ENCODE measurements at regions of chr1 and their contacts with region 1.

Region 1: DNA sequence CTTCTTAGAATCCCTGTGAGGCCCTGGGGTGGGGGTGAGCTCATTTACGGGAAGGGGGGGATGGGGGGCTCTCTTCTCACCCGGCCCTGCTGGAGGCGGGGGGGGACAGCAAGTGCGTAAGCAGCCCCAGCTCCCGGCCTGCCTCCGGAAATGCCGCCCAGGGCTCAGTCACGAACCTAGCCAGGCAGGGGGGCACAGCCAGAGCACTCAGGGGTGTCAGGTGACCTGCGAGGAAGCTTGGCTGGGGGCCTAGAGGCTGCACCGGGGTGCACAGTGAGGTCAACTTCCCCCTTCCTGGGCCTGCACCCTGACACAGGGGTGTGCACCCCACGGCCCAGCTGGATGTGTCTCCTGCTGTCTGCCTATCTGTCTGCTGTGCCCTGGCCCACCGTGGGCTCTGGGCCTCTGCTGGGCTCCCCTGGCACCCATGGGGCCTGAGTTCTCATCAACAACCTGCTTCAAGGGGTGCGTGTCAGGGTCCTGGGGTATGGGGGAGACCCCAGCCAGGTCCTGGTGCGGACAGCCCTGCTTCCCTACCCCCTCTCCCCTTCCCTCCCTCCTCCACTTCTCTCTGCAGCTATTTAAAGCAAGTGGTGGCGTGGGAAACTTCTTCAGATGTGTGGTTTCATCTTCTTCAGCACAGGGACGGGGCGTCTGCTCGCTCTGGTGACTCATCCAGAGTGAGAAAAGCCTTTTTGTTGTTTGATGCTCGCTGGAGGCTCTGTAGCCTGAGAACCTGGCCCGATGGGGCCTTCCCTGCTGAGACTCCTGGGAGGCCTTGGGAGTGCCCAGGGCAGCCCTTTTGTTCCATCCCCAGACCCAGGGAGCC is 92.5 kb upstream of the RUNX3 start:
- DNase-seq: peak; percentile 28 to 53
- ATAC-seq: peak; percentile 36 to 50
- H3K4me3 ChIP-seq: no peak overlapping the region
- H3K27ac ChIP-seq: peak overlapping the region in 1 of 4 donors; percentile 39
- H3K4me1 ChIP-seq: peaks cover 0 to 4% of the 10 kb centered on the region in 2 donors
- H3K27me3 ChIP-seq: no peaks in the 10 kb centered on the region
- CTCF ChIP-seq: no peak
- POLR2A ChIP-seq: no peak

Region 2: DNA sequence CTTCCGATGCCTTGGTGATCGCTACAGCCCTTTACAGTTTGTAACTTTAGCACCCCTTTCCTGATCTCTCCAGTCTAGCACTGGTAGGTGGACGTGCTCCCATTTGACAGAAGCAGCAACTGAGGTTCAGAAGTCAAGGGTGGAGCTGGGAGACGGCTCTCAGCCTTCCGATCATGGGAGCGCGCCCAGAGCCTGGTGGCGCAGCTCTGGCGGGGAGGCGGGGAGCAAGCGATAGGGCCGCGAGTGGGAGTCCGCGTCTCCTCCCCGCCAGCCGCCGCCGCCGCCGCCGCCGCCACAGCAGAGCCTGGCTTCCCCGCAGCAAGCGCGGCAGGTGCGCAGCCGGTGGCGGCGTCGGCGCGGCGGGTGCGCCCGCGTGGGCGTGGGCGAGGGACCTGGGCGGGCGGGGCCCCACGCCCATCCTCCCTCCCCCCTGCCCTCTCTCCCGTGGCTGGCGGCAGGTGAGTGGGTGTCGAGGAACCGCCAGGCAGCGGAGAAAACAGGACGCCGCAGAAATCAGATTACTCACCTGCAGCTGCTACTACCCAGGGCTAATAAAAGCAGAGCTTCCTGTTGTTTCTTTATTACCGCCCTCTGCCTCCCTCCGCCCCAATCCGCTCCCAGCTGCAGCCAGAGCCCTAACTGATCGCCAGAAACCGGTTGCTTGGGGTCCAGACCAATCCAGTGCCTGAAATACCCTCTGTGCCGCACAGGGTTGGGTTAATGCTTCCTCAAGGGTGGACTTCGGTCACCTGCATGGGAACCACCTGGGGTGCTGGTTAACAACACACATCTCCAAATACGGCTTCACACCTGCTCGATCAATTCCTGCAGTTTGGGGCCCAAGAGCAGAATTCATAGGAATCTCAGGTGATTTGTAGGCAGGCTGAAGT is 1403.0 kb before region 1 on chr1:
- in situ Hi-C with region 1: no loop called
- intact Hi-C with region 1: loop called (anchors 10 kb)
- DNase-seq: no peak
- ATAC-seq: peak in 1 of 2 donors; percentile 43
- H3K4me3 ChIP-seq: peak overlapping the region in 3 of 4 donors; percentile 24 to 37 (median 31)
- H3K27ac ChIP-seq: no peak overlapping the region
- H3K4me1 ChIP-seq: no peaks in the 10 kb centered on the region
- H3K27me3 ChIP-seq: peaks cover 0 to 9% (median 6%) of the 10 kb centered on the region in 3 donors
- CTCF ChIP-seq: no peak
- POLR2A ChIP-seq: no peak

Region 3: GRCh38 chr1:24779689-24780464 is 242.7 kb before region 1 on chr1:
- in situ Hi-C with region 1: no loop called
- intact Hi-C with region 1: no loop called
- DNase-seq: no peak
- ATAC-seq: no peak
- H3K4me3 ChIP-seq: no peak overlapping the region
- H3K27ac ChIP-seq: peak overlapping the region in 1 of 4 donors; percentile 7
- H3K4me1 ChIP-seq: peaks cover 6 to 10% of the 10 kb centered on the region in 2 donors
- H3K27me3 ChIP-seq: no peaks in the 10 kb centered on the region
- CTCF ChIP-seq: no peak
- POLR2A ChIP-seq: no peak